GM13977 (cell line): ENCODE measurements at regions of chr12 and their contacts with region 1.

Region 1: DNA sequence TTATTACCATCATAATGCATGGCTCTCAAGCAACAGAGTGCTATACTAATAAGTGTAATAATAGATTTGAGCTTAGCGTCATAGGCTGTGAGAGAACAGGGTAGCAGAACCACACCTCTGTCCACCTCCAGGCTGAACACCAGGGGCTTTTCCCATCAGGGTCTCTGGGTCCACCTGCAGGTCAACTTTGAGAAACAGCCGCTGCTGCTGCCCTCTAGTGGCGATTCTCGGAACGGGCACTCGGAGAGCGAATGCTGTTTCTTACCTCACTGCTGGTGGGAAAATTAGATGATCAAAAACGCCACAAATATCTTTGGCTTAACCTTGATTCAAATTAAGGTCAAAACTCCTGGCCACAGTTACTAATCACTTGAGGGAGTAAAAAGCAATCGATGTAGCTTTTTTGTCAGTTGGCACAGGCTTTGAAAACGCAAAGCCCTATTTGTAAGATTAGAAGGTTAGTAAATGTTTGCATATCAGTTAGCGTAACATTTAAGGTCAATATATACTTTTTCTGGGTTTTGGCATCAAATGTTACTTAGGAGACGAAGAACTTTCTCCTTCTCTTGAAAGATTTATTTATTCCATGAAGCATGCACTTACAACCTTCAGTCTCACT is 127.9 kb upstream of the TMEM132D start:
- DNase-seq: peak; percentile 77
- CTCF ChIP-seq: peak; percentile 96

Region 2: DNA sequence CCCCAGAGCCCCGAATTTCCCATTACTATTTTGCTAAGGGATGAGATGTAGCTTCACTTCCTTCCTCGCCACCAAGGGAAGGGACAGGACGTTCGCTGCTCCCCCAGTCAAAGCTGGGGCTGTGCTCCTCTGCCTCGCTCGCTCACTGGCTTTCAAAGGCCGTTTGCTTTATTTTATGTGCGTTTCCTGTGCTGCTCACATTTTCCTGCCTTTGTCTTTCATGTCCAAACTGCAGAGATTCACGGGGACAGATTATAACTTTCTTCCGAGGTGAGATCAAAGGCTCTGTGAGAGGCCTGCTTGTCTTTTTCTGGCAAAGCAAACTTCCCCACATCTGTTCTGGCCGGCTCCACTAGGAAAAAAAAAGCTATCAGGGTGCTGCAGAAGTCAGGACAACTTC is 54.6 kb after region 1 on chr12:
- in situ Hi-C with region 1: no loop called
- DNase-seq: no peak
- CTCF ChIP-seq: no peak

Region 3: GRCh38 chr12:130335517-130336392 is 304.1 kb after region 1 on chr12:
- in situ Hi-C with region 1: loop called (anchors 25 kb)
- DNase-seq: peak; percentile 75
- CTCF ChIP-seq: peak; percentile 67

Region 4: DNA sequence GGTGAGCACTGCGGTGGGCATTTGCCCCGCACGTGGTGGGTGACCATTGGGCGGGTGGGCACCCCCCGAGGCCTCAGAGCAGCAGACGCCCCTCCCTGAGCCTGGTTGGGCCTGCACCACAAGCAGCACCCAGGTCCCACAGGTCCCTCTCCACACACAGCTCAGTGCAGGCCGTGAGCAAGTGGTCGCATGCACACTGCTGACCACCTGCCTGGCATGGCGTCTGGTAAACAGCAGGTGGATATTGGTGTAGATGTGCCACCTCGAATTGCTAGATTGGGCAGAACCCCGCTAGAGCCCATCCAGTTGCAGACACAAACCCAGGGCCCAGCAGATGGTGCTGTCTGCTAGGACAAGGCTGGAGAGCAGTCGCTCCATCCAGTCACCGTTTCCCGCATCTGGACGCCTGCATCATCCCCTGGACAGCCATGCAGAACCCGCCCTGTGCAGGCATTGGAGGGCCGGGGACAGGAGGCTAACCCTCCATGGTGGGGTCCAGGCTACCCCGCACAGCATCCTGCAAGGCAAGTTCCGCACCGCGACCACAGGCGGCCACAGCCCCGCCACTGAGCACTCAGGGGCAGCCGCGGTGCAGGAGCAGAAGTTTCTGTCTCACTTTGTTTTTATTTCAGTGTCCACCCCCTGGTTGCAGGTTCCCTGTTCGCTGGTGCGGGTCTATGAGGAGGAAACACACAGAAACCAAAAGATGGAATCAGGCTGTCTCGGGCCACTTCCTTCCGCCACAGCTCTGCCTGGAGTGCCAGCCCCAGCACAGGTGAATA is 730.0 kb after region 1 on chr12:
- in situ Hi-C with region 1: loop called (anchors 25 kb)
- DNase-seq: peak; percentile 77
- CTCF ChIP-seq: peak; percentile 72